Right ventricle myocardium inferior (tissue), 1 donor: ENCODE measurements at regions of chrX and their contacts with region 1.

Region 1: GRCh38 chrX:41558531-41558930 is 111.4 kb downstream of the NYX start:
- DNase-seq: no peak
- ATAC-seq: no peak

Region 2: DNA sequence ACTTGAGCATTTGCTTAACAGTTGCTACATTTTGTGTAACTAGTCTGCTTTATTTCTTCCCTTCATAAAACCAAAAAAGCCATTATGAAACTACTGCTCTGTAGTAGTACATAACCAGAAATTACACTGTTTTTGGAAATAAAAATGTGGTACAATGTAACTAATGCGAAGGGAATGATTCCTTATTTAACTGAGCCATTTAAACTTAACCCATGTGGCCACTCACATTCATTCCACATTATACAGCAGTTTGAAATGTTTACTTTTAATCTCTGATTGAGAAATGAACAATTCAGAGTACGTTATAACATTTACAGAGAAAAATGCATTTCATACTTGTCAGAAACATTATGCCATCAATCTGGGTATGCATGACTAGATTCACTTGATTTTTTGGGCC is 17.1 kb before region 1 on chrX:
- intact Hi-C with region 1: no loop called
- DNase-seq: no peak
- ATAC-seq: no peak

Region 3: DNA sequence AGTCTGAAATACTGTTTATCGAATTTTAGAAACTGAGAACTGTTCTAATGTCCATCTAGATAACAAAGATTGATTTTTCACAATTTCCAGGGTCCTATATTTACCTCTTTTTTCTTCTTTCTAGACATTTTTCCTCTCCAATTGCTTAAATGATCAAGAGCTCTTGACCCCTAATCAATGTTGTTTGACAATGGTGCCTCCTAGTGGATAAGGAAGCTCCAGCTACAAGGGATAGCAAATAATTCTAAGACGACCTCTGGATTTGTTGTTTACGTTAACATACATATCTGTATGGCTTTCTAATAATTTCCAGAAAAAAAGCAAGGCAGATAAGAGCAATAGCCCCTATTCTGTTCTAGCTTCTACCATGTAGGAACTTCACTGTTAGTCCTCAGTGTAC is 201.3 kb after region 1 on chrX:
- intact Hi-C with region 1: loop called (anchors 5 kb)
- DNase-seq: no peak
- ATAC-seq: no peak